Activated naive CD4-positive, alpha-beta T cell treated with anti-CD3 and anti-CD28 coated beads for 36 hours (primary cell): ENCODE measurements at regions of chr12 and their contacts with region 1.

Region 1: GRCh38 chr12:12696562-12697383 is 790 bp upstream of the GPR19 start:
- DNase-seq: peak; percentile 93
- H3K4me3 Mint-ChIP-seq: peak overlapping the region; percentile 97
- H3K27ac Mint-ChIP-seq: peak overlapping the region; percentile 98
- H3K4me1 Mint-ChIP-seq: peaks cover 38% of the 10 kb centered on the region
- H3K27me3 Mint-ChIP-seq: no peaks in the 10 kb centered on the region

Region 2: GRCh38 chr12:12070674-12071656 is 625.8 kb before region 1 on chr12 and contains the start of gene BCL2L14:
- CTCF ChIA-PET with region 1: no interaction called
- intact Hi-C with region 1: loop called (anchors 5 kb)
- DNase-seq: peak; percentile 52
- H3K4me3 Mint-ChIP-seq: peak within 1 kb of the TSS; percentile 85
- H3K27ac Mint-ChIP-seq: peak within 1 kb of the TSS; percentile 90
- H3K4me1 Mint-ChIP-seq: peaks cover 36% of the 10 kb centered on the region
- H3K27me3 Mint-ChIP-seq: no peaks in the 10 kb centered on the region
- total RNA-seq, gene BCL2L14: 19.4 to 21.8 TPM

Region 3: DNA sequence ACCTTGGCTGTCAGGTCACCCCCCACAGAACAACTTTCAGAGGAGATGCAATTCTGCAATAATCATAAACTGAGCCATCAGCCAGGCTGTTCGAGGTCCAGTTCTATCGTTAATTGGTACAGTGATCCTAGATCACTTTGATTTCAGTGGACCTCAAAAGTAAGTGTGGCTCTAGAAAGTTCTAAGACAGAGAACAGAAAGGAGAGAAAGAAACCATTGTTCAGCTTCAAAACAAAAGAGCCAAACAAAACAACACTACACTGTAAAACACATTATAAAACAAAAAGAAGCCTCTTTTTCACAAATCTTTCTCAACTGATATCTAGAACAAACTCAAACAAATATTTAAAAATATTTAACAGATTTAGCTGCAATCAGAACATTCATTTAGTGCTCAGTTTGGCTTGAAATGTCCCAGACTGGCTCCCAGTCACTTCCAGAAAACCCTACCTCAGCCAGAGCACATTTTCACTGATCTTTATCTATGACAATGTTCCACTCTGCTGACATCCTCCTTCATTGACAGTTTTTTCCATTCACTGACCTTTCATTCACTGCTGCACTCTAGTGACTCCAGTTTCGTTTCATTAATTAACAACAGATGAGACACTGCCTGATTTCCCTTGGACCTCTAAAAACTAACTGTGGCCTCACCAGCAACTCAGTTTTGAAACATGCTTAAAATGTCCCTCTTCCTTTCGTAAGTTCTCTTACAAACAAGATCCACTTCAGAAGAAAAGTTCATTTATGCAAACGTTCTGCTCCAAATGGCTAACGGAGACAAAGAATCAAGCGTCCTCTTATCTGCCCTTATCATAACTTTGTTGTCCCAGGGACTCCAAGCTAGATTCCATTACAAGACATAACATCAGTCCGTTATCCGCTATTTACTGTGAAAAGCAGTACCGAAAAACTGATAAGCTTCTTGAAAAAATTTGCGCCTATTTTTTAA is 191.0 kb before region 1 on chr12:
- CTCF ChIA-PET with region 1: no interaction called
- intact Hi-C with region 1: loop called (anchors 2 kb)
- DNase-seq: peak; percentile 61
- H3K4me3 Mint-ChIP-seq: peak overlapping the region; percentile 25
- H3K27ac Mint-ChIP-seq: peak overlapping the region; percentile 93
- H3K4me1 Mint-ChIP-seq: peaks cover 80% of the 10 kb centered on the region
- H3K27me3 Mint-ChIP-seq: no peaks in the 10 kb centered on the region

Region 4: GRCh38 chr12:12661086-12661485 is 35.7 kb before region 1 on chr12:
- CTCF ChIA-PET with region 1: interaction called, 4 read pairs
- intact Hi-C with region 1: loop called (anchors 1 kb)
- DNase-seq: no peak
- H3K4me3 Mint-ChIP-seq: no peak overlapping the region
- H3K27ac Mint-ChIP-seq: no peak overlapping the region
- H3K4me1 Mint-ChIP-seq: peaks cover under 1% of the 10 kb centered on the region
- H3K27me3 Mint-ChIP-seq: no peaks in the 10 kb centered on the region

Region 5: DNA sequence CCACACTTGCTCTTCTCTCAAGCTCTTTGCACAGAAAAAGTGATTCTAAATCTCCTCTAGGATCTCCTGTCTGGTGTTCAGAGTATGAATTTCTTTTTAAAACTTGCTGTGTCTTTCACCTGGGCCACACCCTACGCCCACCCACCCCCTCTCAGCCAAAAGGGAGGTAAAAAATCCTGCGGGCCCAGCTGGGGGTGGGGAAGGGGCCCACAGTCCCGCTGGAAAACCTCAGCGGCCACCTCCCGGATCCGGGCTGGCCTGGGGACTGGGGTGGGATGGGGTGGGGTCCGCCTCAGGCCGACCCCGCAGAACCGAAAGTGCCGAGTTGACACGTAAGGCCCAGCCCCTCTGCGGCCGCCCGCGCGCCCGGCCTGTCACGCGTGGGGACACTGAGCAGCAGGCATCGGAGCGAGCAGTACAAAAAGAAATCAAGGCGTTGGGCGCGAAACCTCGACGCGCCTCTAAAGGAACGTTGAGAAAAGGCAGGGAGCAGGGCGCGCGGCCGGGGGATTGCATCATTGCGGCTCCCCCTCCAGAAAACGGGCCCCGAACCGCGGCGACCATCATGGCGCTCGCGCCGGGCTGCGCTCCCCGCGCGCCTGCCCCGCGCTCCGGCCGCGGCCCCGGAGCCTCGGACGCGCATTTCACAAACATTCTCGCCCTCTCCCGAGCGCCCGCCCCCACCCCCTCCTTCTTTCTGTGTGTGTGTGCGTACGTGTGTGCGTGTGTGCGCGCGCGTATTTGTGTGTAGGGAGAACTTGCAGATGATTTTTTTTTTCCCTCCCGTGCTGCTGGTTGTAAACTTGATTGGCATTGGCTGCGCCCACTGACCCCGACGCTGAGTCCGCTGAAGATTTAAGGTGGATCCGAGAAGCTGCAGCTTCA is 28.1 kb after region 1 on chr12:
- CTCF ChIA-PET with region 1: interaction called, 6 read pairs
- intact Hi-C with region 1: loop called (anchors 1 kb)
- DNase-seq: peak; percentile 94
- H3K4me3 Mint-ChIP-seq: peak overlapping the region; percentile 85
- H3K27ac Mint-ChIP-seq: peak overlapping the region; percentile 98
- H3K4me1 Mint-ChIP-seq: peaks cover 51% of the 10 kb centered on the region
- H3K27me3 Mint-ChIP-seq: no peaks in the 10 kb centered on the region

Region 6: GRCh38 chr12:12946686-12947355 is 250.0 kb after region 1 on chr12:
- CTCF ChIA-PET with region 1: no interaction called
- intact Hi-C with region 1: no loop called
- DNase-seq: no peak
- H3K4me3 Mint-ChIP-seq: no peak overlapping the region
- H3K27ac Mint-ChIP-seq: no peak overlapping the region
- H3K4me1 Mint-ChIP-seq: no peaks in the 10 kb centered on the region
- H3K27me3 Mint-ChIP-seq: no peaks in the 10 kb centered on the region